Posterior vena cava (tissue), 2 donors: ENCODE measurements at regions of chr2 and their contacts with region 1.

Region 1: GRCh38 chr2:18987592-18988073 is 370.8 kb downstream of the OSR1 start:
- DNase-seq: peak; percentile 89

Region 2: DNA sequence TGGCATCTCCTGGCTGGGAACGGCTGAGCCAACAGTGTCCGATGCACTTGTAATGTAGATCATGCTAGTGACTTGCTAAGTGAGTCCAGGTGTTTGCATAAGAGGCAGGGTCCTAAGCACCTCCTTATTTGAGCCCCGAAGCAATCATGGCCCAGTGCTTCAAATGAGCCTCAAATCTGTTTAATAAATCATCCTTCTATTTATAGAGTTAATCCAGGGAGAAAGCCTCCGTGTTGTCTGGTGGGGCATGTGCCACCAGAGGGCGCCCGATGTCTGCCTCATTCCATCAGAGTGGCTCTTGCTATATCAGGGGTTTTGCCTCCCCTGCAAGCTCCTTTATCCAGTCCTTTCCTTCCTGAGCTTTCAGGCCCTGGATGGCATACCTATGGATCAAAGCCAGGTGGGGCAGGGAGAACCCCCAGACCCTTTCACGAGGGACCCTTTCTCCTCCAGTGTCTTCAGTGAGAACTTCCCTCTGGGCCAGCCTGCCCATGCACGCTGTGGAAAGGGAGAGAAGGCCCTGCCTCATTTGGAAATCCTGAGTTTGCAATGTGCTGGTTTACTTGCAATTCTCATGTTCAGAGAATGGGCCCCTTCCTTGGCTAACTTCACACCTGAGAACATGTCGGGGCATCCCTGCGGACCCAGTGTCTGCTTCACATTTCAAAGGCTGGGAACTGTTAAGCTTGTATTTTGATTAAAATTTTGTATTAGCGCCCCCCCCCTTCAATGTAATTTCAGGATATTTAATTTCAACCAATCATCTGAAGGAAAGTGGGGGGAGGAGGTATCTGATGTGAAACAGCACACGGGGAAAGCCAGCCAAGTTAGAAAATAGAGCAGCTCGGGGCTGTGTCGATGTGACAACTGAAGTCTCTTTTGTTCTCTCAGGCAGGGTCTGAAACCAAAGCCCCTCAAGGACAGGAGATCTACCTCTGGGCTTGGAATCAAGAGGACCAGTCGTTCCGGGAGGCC is 466.9 kb before region 1 on chr2:
- intact Hi-C with region 1: no loop called
- DNase-seq: peak; percentile 95

Region 3: GRCh38 chr2:18932853-18933252 is 54.8 kb before region 1 on chr2:
- intact Hi-C with region 1: no loop called
- DNase-seq: no peak

Region 4: DNA sequence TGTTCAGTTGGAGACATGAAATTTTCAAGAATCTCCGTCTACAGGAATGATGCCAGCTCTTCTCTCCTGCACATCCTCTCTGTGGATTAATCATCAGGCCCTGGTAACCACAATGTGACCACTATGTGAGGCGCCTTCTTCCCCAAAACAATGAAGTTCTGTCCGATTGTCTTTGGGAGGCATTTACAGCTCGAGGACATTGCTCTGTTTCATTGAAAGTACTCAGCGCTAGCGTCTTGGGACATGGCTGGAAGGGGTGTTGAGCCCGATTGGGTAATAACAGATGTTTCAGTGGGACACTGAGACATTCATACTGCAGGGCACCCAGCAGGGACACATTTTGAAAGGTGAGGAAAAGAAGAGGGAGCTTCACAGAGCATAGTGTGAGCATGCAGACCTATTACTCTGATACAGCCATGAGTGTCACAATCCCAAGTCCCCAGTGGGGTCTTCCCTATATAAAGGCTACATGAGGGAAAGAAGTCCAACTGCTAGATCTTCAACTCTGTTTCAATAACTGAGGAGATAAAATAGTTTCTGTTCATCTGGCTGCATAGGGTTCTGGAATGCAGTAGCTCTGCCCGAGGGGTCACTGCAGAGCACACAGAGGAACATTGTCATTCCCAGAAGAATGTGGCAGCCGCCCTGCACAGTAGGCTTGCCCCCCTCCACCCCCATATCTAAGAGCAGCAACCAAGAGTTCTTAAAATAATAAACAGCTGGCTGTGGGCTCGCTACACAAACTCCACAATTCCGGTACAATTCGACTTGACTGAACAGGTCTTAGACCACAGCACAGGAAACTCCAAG is 133.5 kb after region 1 on chr2:
- intact Hi-C with region 1: no loop called
- DNase-seq: no peak

Region 5: GRCh38 chr2:19349911-19350677 is 362.5 kb after region 1 on chr2:
- intact Hi-C with region 1: loop called in 1 of 2 experiments (anchors 10 kb)
- DNase-seq: peak; percentile 90